ENCODE measurements at regions of chr17 and their contacts with region 1.

Region 1: DNA sequence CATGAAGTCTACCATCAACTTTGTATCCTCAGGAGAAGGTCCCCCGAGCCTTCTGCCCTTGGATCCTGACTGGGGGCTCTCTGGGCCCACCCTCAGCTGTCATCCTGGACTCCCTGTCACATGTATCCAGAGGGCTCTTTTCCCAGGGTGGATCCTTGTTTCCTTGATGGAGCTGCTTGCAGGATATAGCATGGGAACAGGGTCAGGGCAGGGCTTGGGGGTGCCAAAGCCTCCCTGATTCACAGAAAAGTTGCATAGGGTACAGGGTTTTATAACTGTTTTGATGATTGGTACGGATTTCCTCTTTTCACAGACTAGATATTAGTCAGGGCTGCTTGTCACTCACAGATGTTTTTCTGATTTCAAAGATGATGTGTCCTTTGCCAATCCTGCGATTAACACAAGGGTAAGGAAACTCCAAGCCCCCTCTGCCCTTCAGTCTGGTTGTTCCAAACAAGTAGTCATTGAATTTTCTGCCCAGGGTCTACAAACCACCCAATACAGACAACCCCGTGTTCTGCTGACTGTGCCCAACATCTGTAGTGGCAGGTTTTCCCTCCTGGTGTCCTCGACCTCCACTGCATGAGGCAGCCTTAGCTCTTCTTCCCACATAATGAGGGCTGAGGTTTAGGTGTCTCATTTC is 20.6 kb upstream of the SLC35G3 start:
- DNase-seq: peak in 13 of 14 experiments; percentile 13 to 72 (median 29)
- ATAC-seq: peak; percentile 52
- H3K4me3 ChIP-seq: peak overlapping the region; percentile 46
- H3K4me3 Mint-ChIP-seq: peak overlapping the region; percentile 18
- H3K27ac ChIP-seq: peak overlapping the region; percentile 75 to 89
- H3K27ac Mint-ChIP-seq: peak overlapping the region; percentile 91
- H3K4me1 ChIP-seq: peaks cover 75% of the 10 kb centered on the region
- H3K4me1 Mint-ChIP-seq: peaks cover 91% of the 10 kb centered on the region
- H3K27me3 ChIP-seq: no peaks in the 10 kb centered on the region
- H3K27me3 Mint-ChIP-seq: no peaks in the 10 kb centered on the region
- CTCF ChIP-seq: no peak

Region 2: DNA sequence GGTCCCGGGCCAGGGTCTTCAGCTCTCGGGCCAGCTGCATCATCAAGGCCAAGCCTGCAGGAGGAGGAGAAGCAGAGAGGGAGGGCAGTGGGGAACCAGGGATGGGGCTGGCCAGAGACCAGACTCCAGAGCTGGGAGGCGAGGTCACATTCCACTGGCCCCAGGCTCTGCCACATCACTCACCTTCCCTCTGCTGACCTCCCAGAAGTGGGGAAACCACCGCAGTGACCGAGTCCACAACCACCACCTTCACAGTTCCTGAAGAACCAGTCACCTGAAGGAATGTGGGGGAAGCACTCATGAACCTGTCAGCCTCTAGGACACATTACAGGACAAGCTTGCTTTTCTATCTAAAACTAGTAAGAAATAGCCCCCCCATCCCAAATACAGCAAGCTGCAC is 111.5 kb before region 1 on chr17:
- CTCF ChIA-PET with region 1: no interaction called
- POLR2A ChIA-PET with region 1: no interaction called
- intact Hi-C with region 1: no loop called
- DNase-seq: no peak
- ATAC-seq: no peak
- H3K4me3 ChIP-seq: no peak overlapping the region
- H3K4me3 Mint-ChIP-seq: no peak overlapping the region
- H3K27ac ChIP-seq: no peak overlapping the region
- H3K27ac Mint-ChIP-seq: no peak overlapping the region
- H3K4me1 ChIP-seq: no peaks in the 10 kb centered on the region
- H3K4me1 Mint-ChIP-seq: no peaks in the 10 kb centered on the region
- H3K27me3 ChIP-seq: no peaks in the 10 kb centered on the region
- H3K27me3 Mint-ChIP-seq: no peaks in the 10 kb centered on the region
- CTCF ChIP-seq: no peak

Region 3: GRCh38 chr17:35161281-35161761 is 53.4 kb before region 1 on chr17:
- CTCF ChIA-PET with region 1: interaction called, 5 read pairs
- POLR2A ChIA-PET with region 1: interaction called, 19 read pairs
- intact Hi-C with region 1: no loop called
- DNase-seq: peak in 6 of 14 experiments; percentile 15 to 78 (median 56)
- ATAC-seq: peak; percentile 70
- H3K4me3 ChIP-seq: peak overlapping the region; percentile 30
- H3K4me3 Mint-ChIP-seq: peak overlapping the region; percentile 67
- H3K27ac ChIP-seq: peak overlapping the region; percentile 62 to 68
- H3K27ac Mint-ChIP-seq: peak overlapping the region; percentile 89
- H3K4me1 ChIP-seq: peaks cover 53% of the 10 kb centered on the region
- H3K4me1 Mint-ChIP-seq: peaks cover 66% of the 10 kb centered on the region
- H3K27me3 ChIP-seq: no peaks in the 10 kb centered on the region
- H3K27me3 Mint-ChIP-seq: no peaks in the 10 kb centered on the region
- CTCF ChIP-seq: no peak

Region 4: GRCh38 chr17:35189291-35189690 is 25.5 kb before region 1 on chr17:
- CTCF ChIA-PET with region 1: interaction called, 4 read pairs
- POLR2A ChIA-PET with region 1: interaction called, 40 read pairs
- intact Hi-C with region 1: no loop called
- DNase-seq: peak in 1 of 14 experiments; percentile 32
- ATAC-seq: no peak
- H3K4me3 ChIP-seq: no peak overlapping the region
- H3K4me3 Mint-ChIP-seq: peak overlapping the region; percentile 69
- H3K27ac ChIP-seq: peak overlapping the region in 1 of 2 donors; percentile 10
- H3K27ac Mint-ChIP-seq: peak overlapping the region; percentile 90
- H3K4me1 ChIP-seq: peaks cover 31% of the 10 kb centered on the region
- H3K4me1 Mint-ChIP-seq: peaks cover 82% of the 10 kb centered on the region
- H3K27me3 ChIP-seq: no peaks in the 10 kb centered on the region
- H3K27me3 Mint-ChIP-seq: no peaks in the 10 kb centered on the region
- CTCF ChIP-seq: no peak

Region 5: GRCh38 chr17:35242805-35243560 is 28.2 kb after region 1 on chr17 and contains the start of gene SLFN5:
- CTCF ChIA-PET with region 1: interaction called, 19 read pairs
- POLR2A ChIA-PET with region 1: interaction called, 440 read pairs
- intact Hi-C with region 1: loop called (anchors 1 to 2 kb)
- DNase-seq: peak; percentile 89 to 97 (median 94)
- ATAC-seq: peak; percentile 79
- H3K4me3 ChIP-seq: peak within 1 kb of the TSS; percentile 99
- H3K4me3 Mint-ChIP-seq: peak within 1 kb of the TSS; percentile 99
- H3K27ac ChIP-seq: peak within 1 kb of the TSS; percentile 92 to 99
- H3K27ac Mint-ChIP-seq: peak within 1 kb of the TSS; percentile 100
- H3K4me1 ChIP-seq: peaks cover 42% of the 10 kb centered on the region
- H3K4me1 Mint-ChIP-seq: peaks cover 61% of the 10 kb centered on the region
- H3K27me3 ChIP-seq: no peaks in the 10 kb centered on the region
- H3K27me3 Mint-ChIP-seq: no peaks in the 10 kb centered on the region
- CTCF ChIP-seq: no peak
- total RNA-seq, gene SLFN5: 28.5 to 32.7 TPM

Region 6: DNA sequence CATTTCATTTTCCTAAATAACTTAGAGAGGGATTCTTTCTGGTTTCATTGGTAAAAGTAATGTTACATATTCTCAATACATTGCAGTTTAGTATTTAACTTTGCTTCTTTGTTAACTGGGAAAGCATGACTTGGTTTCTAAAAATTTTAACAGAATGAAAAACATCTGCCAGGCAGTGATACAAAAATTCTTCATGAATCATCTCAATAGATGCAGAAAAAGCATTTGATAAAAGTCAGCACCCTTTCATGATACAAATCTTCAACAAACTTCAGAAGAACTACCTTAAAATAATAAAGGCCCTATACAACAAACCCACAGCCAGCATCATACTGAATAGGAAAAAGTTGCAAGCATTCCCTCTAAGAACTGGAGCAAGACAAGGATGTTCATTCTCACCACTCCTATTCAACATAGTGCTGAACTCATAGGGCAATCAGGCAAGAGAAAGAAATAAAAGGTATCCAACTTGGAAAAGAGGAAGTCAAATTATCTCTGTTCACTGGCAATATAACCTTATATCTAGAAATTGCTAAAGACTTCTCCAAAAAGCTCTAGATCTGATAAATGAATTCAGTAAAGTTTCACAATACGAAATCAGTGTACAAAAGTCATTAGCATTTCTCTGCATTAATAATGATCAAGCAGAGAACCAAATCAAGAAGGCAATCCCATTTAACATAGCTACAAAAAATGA is 78.5 kb after region 1 on chr17:
- CTCF ChIA-PET with region 1: no interaction called
- POLR2A ChIA-PET with region 1: no interaction called
- intact Hi-C with region 1: no loop called
- DNase-seq: no peak
- ATAC-seq: no peak
- H3K4me3 ChIP-seq: no peak overlapping the region
- H3K4me3 Mint-ChIP-seq: no peak overlapping the region
- H3K27ac ChIP-seq: no peak overlapping the region
- H3K27ac Mint-ChIP-seq: no peak overlapping the region
- H3K4me1 ChIP-seq: peaks cover 3% of the 10 kb centered on the region
- H3K4me1 Mint-ChIP-seq: peaks cover 20% of the 10 kb centered on the region
- H3K27me3 ChIP-seq: no peaks in the 10 kb centered on the region
- H3K27me3 Mint-ChIP-seq: no peaks in the 10 kb centered on the region
- CTCF ChIP-seq: no peak

Region 7: DNA sequence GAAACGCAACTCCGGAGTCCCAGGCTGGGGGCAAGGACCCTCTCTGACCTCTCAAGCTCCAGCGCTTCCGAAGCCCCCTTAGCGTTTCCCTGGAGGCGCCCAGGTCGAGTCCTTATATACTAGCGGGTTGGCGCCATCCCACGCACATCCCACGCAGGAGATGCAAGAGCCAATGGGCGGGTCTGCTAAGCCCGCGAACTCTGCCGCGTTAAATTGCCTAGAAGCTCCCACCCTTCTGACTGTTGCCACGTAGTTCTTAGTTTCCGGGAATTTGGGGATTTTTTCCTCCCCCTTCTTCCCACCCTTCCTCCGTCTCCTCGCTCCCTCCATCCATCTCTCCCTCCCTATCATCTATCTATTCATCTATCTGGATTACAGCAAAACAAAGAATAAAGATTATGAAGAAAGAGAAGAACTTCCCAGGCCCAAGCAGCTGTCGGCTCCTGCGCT is 158.8 kb after region 1 on chr17 and contains the start of gene SLFN11:
- CTCF ChIA-PET with region 1: no interaction called
- POLR2A ChIA-PET with region 1: interaction called, 15 read pairs
- intact Hi-C with region 1: no loop called
- DNase-seq: peak; percentile 50 to 94 (median 71)
- ATAC-seq: peak; percentile 88
- H3K4me3 ChIP-seq: peak within 1 kb of the TSS; percentile 84
- H3K4me3 Mint-ChIP-seq: peak within 1 kb of the TSS; percentile 96
- H3K27ac ChIP-seq: peak within 1 kb of the TSS; percentile 80 to 96
- H3K27ac Mint-ChIP-seq: peak within 1 kb of the TSS; percentile 95
- H3K4me1 ChIP-seq: peaks cover 16% of the 10 kb centered on the region
- H3K4me1 Mint-ChIP-seq: peaks cover 62% of the 10 kb centered on the region
- H3K27me3 ChIP-seq: no peaks in the 10 kb centered on the region
- H3K27me3 Mint-ChIP-seq: no peaks in the 10 kb centered on the region
- CTCF ChIP-seq: no peak
- total RNA-seq, gene SLFN11: 16.5 to 18.5 TPM

Region 8: GRCh38 chr17:35404360-35404759 is 189.6 kb after region 1 on chr17:
- CTCF ChIA-PET with region 1: no interaction called
- POLR2A ChIA-PET with region 1: no interaction called
- intact Hi-C with region 1: no loop called
- DNase-seq: peak in 1 of 14 experiments; percentile 12
- ATAC-seq: no peak
- H3K4me3 ChIP-seq: no peak overlapping the region
- H3K4me3 Mint-ChIP-seq: no peak overlapping the region
- H3K27ac ChIP-seq: no peak overlapping the region
- H3K27ac Mint-ChIP-seq: no peak overlapping the region
- H3K4me1 ChIP-seq: no peaks in the 10 kb centered on the region
- H3K4me1 Mint-ChIP-seq: peaks cover 6% of the 10 kb centered on the region
- H3K27me3 ChIP-seq: no peaks in the 10 kb centered on the region
- H3K27me3 Mint-ChIP-seq: no peaks in the 10 kb centered on the region
- CTCF ChIP-seq: no peak

Region 9: DNA sequence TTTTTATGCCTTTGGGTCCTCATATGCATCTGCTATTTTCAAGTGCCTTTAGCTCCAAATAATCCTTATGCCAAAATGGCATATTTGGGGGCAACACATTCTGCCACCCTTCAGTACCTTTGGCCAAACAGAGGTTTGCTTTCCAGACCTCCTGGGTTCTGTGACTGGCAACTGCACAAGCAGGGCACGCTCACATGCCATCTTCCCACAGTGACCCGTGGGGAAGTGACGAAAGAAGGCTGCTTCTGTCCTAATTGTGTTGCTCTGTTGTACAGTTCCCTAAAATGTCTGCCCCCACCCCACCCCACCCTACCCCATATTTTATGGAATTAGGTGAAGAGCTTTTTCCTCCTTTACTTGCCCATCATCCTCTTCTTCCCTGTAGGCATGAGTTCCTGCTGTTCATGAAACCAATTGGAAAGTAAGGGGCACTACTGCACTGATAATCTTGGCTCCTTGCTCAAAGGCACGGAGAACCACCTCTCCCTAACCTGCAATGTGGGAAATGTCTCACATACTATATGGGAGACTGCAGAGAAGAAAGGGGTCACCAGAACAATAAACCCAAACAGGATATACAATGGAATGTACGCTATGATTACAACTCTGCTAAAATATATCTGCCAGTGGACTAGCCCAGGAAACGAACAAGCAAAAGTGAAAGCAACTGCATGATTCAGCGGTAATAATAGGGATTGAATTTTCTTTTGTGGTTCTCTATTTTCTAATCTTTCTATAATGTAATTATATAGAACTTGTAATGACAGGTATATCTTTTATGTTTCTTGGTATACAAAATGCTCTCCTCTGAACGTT is 326.0 kb after region 1 on chr17:
- CTCF ChIA-PET with region 1: interaction called, 3 read pairs
- POLR2A ChIA-PET with region 1: interaction called, 67 read pairs
- intact Hi-C with region 1: no loop called
- DNase-seq: peak in 7 of 14 experiments; percentile 21 to 83 (median 59)
- ATAC-seq: peak; percentile 47
- H3K4me3 ChIP-seq: peak overlapping the region; percentile 56
- H3K4me3 Mint-ChIP-seq: peak overlapping the region; percentile 93
- H3K27ac ChIP-seq: peak overlapping the region; percentile 67 to 85
- H3K27ac Mint-ChIP-seq: peak overlapping the region; percentile 82
- H3K4me1 ChIP-seq: peaks cover 23% of the 10 kb centered on the region
- H3K4me1 Mint-ChIP-seq: peaks cover 60% of the 10 kb centered on the region
- H3K27me3 ChIP-seq: no peaks in the 10 kb centered on the region
- H3K27me3 Mint-ChIP-seq: no peaks in the 10 kb centered on the region
- CTCF ChIP-seq: no peak

Measured in CD4-positive, alpha-beta T cell (primary cell).